Activated naive CD4-positive, alpha-beta T cell treated with anti-CD3 and anti-CD28 coated beads, Interleukin-2, amount 10 ng/mL, durations not matched to agents 7 days and 5 days (primary cell): ENCODE measurements at regions of chr14 and their contacts with region 1.

Region 1: DNA sequence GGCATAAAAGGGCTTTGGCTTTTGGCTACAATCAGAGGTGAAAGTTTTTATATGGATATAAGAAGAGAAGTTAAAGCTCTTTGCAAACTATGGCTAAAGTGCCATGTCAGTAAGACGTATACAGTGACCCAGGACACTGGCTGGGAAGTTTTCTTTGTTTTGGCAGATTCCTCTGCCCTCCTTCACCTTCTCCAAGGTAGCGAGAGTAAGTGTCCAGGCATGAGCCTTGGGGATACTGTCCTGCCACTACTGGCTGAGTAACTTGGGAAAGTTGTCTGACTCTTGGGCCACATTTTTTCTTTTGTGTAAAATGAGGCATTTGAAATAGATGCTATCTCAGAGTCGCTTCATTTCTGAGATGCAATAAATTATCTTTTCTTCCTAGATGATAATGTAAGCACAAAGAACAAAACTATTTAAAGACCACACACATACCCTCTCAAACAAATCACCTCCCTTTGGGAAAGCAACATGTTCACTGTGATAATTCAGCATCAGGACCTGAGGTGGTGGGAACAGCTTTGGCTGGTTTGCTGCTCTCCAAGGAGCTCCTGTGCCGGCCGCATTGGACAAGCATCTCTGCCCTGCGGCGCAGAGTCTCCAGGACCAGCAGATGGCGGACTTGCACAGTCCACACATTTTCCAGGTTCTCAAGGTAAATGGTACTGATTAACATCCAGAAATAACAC is 106.3 kb downstream of the PTCSC3 start:
- DNase-seq: peak; percentile 55
- H3K4me3 Mint-ChIP-seq: no peak overlapping the region
- H3K27ac Mint-ChIP-seq: no peak overlapping the region
- H3K4me1 Mint-ChIP-seq: no peaks in the 10 kb centered on the region
- H3K27me3 Mint-ChIP-seq: peaks cover 26% of the 10 kb centered on the region

Region 2: DNA sequence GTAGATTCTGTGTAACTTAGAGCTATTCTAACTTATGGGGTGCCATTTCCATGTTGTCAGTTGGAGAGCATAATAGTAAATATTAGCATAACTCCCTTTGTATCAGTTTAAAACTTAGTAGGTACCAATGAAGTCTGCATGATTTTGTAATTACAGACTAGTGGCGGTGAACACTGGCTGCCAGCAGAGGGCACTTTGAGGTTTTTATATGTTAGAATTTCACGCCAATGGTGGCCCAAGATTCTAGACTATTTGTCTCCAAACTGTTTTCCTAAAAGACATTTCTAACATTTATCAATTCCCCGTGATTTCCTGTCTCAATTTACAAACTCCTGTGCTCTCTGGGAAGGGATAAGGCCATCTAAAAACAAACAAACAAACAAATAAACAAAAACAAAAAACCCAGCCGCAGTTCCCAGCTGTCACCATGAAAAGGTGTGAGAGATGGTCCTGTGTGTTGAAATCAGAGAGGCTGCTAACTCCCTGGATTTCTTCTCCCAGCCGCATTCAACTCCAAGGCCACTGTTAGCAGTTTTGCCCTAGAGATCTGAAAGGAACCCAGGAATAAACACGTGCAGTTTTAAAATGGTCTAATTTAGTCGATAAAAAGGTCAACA is 186.4 kb before region 1 on chr14:
- CTCF ChIA-PET with region 1: interaction called, 118 read pairs
- DNase-seq: peak; percentile 53
- H3K4me3 Mint-ChIP-seq: no peak overlapping the region
- H3K27ac Mint-ChIP-seq: no peak overlapping the region
- H3K4me1 Mint-ChIP-seq: peaks cover 5% of the 10 kb centered on the region
- H3K27me3 Mint-ChIP-seq: peaks cover 13% of the 10 kb centered on the region

Region 3: GRCh38 chr14:35959835-35960234 is 110.3 kb before region 1 on chr14:
- CTCF ChIA-PET with region 1: interaction called, 13 read pairs
- DNase-seq: no peak
- H3K4me3 Mint-ChIP-seq: no peak overlapping the region
- H3K27ac Mint-ChIP-seq: no peak overlapping the region
- H3K4me1 Mint-ChIP-seq: no peaks in the 10 kb centered on the region
- H3K27me3 Mint-ChIP-seq: peaks cover 4% of the 10 kb centered on the region

Region 4: GRCh38 chr14:36373982-36374673 is 304.0 kb after region 1 on chr14:
- CTCF ChIA-PET with region 1: interaction called, 83 read pairs
- DNase-seq: peak; percentile 81
- H3K4me3 Mint-ChIP-seq: no peak overlapping the region
- H3K27ac Mint-ChIP-seq: no peak overlapping the region
- H3K4me1 Mint-ChIP-seq: no peaks in the 10 kb centered on the region
- H3K27me3 Mint-ChIP-seq: peaks cover 4% of the 10 kb centered on the region

Region 5: DNA sequence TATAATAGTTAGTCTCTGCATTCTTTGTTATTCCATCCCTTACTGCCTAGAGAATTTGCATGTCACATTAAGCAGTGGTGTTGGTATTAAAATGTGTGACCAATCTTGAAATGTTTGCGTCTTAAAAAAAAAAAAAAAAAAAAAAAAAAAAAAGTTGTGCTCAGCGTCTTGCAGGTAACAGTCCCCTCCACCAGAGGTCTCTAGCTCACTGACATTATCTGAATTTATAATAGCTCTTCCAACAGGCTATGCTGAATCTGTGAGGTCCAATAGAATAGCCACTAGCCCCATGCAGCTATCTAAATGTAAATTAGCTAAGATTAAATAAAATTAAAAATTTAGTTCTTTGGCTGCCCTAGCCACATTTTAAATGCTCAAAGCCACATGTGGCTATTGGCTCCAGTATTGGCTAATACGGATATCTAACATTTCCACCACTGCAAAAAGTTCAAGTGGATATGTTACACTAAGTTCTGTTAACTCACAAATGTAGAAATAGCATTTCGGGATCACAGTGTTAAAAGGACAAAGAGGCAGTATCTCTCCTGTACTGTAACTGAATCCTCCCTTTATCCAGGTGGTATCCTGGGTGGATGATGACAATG is 483.6 kb after region 1 on chr14:
- CTCF ChIA-PET with region 1: interaction called, 13 read pairs
- DNase-seq: no peak
- H3K4me3 Mint-ChIP-seq: no peak overlapping the region
- H3K27ac Mint-ChIP-seq: no peak overlapping the region
- H3K4me1 Mint-ChIP-seq: no peaks in the 10 kb centered on the region
- H3K27me3 Mint-ChIP-seq: peaks cover 4% of the 10 kb centered on the region